ENCODE measurements at regions of chr12 and their contacts with region 1.

Region 1: DNA sequence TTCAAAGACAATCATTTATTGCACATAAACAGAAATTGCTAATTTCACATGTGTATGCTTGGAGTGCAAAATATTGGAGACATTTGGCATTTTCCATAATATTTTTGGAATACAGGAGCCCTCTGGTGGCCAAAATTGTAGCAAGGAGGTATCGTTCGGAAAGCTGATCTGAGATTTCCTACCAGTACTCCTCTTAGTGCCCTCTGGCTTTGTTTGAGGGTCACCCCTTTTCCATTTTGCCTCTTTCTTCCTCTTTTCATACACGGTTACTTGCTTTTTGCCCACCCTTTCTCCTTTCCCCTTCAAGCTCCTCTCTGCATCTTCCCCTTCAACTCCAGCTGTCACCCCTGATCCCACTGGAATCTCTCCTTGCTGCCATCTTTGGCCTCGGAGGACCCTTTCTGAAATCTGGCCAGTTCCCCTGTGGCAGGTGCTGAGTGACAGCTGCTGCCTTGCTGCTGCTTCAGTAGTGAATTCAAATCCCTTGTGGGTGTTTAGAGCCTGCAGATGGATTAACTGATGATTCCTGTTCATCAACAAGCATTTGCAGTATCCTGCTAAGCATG is 164.6 kb upstream of the PARP11 start:
- DNase-seq: no peak
- H3K4me3 ChIP-seq: no peak overlapping the region
- H3K27ac ChIP-seq: no peak overlapping the region
- H3K4me1 ChIP-seq: no peaks in the 10 kb centered on the region
- CTCF ChIP-seq: peak; percentile 74

Region 2: DNA sequence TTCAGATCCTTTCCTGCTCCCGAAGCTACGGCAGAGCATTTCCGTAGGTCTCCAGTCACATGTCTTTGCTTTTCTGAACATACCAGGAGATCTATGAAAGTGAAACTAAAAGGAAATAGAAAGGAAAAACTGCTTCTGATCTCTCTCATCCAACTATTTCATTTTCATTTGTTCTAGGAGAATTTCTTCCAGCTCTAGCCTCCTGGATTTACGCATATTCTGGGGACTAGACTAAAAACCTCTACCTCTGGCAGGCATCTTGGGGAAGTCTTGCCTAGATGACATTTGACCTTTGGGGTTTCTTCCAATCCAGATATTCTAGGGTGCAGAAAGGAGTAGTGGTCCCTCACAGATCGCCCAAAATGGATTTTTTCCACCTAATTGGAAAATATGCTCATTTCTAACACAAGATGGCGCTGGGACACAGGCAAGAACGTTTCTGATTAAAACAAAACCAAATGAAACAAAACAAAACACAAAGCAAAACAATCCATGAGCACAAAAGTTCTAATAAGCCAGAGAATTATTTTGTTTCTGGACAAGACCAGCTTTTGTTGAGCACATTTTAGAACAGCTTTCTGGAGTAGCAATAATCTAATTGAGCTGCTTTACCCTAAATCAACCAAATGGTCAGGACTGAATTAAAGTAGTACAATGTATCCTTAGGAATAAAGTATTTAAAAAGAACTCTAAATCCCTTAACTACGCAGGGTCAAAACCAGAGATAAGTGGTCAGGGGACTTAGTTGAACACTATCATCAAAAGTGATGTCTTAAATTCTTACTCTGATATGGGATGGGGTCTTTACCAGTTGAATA is 152.3 kb before region 1 on chr12:
- CTCF ChIA-PET with region 1: no interaction called
- POLR2A ChIA-PET with region 1: no interaction called
- intact Hi-C with region 1: loop called (anchors 5 kb)
- DNase-seq: peak; percentile 47
- H3K4me3 ChIP-seq: no peak overlapping the region
- H3K27ac ChIP-seq: no peak overlapping the region
- H3K4me1 ChIP-seq: no peaks in the 10 kb centered on the region
- CTCF ChIP-seq: peak; percentile 96